OCI-LY7 (cell line): ENCODE measurements at regions of chr11 and their contacts with region 1.

Region 1: GRCh38 chr11:21037850-21038249 is 368.5 kb downstream of the NELL1 start:
- DNase-seq: no peak
- H3K4me3 ChIP-seq: no peak overlapping the region
- H3K27ac ChIP-seq: no peak overlapping the region
- H3K4me1 ChIP-seq: no peaks in the 10 kb centered on the region
- CTCF ChIP-seq: no peak

Region 2: DNA sequence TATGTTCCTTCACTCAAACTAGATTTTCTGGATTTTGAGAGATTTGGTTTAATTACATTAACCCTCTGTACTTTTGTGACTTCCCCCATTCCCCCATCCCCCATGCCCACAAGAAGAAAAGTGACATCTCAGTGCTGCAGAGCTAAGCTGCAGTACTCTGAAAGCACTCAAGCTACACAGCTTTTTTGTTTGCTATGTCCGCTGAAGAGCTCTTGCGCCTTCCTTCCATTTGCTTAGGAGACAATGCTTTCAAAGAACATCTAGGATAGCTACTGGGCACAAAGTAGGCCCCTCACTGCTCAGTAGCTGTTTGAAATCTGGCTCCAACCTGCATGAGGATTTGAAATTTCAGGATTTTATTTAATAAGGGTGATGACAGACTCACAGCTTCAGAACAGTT is 1370.1 kb after region 1 on chr11:
- CTCF ChIA-PET with region 1: no interaction called
- POLR2A ChIA-PET with region 1: no interaction called
- intact Hi-C with region 1: loop called (anchors 5 kb)
- DNase-seq: no peak
- H3K4me3 ChIP-seq: no peak overlapping the region
- H3K27ac ChIP-seq: no peak overlapping the region
- H3K4me1 ChIP-seq: no peaks in the 10 kb centered on the region
- CTCF ChIP-seq: no peak